WTC11 (cell line): ENCODE measurements at regions of chr1 and their contacts with region 1.

Region 1: GRCh38 chr1:160291248-160292220 is 6.6 kb upstream of the PEX19 start:
- DNase-seq: peak; percentile 61
- ATAC-seq: peak; percentile 95
- H3K4me3 Mint-ChIP-seq: no peak overlapping the region
- H3K27ac Mint-ChIP-seq: no peak overlapping the region
- H3K4me1 Mint-ChIP-seq: peaks cover 2% of the 10 kb centered on the region
- H3K27me3 Mint-ChIP-seq: no peaks in the 10 kb centered on the region
- CTCF ChIP-seq: peak; percentile 66

Region 2: GRCh38 chr1:160071289-160071688 is 220.2 kb before region 1 on chr1:
- CTCF ChIA-PET with region 1: no interaction called
- POLR2A ChIA-PET with region 1: no interaction called
- DNase-seq: no peak
- ATAC-seq: no peak
- H3K4me3 Mint-ChIP-seq: no peak overlapping the region
- H3K27ac Mint-ChIP-seq: no peak overlapping the region
- H3K4me1 Mint-ChIP-seq: peaks cover 32% of the 10 kb centered on the region
- H3K27me3 Mint-ChIP-seq: peaks cover 81% of the 10 kb centered on the region
- CTCF ChIP-seq: no peak

Region 3: GRCh38 chr1:160108888-160109662 is 182.5 kb before region 1 on chr1:
- CTCF ChIA-PET with region 1: interaction called, 48 read pairs
- POLR2A ChIA-PET with region 1: no interaction called
- DNase-seq: no peak
- ATAC-seq: peak; percentile 61
- H3K4me3 Mint-ChIP-seq: no peak overlapping the region; the same call in 1 of the 2 replicates
- H3K27ac Mint-ChIP-seq: peak overlapping the region; percentile 30
- H3K4me1 Mint-ChIP-seq: peaks cover 50% of the 10 kb centered on the region
- H3K27me3 Mint-ChIP-seq: peaks cover 5% of the 10 kb centered on the region; the same call in 1 of the 2 replicates
- CTCF ChIP-seq: peak; percentile 33; the same call in 1 of the 2 replicates

Region 4: GRCh38 chr1:160169553-160170399 is 121.8 kb before region 1 on chr1:
- CTCF ChIA-PET with region 1: interaction called, 14 read pairs
- POLR2A ChIA-PET with region 1: no interaction called
- DNase-seq: peak; percentile 75
- ATAC-seq: peak; percentile 78
- H3K4me3 Mint-ChIP-seq: peak overlapping the region; percentile 42
- H3K27ac Mint-ChIP-seq: peak overlapping the region; percentile 94
- H3K4me1 Mint-ChIP-seq: peaks cover 64% of the 10 kb centered on the region
- H3K27me3 Mint-ChIP-seq: peaks cover 25% of the 10 kb centered on the region
- CTCF ChIP-seq: no peak

Region 5: GRCh38 chr1:160261893-160262794 is 29.4 kb before region 1 on chr1 and contains the start of gene DCAF8:
- CTCF ChIA-PET with region 1: interaction called, 18 read pairs
- POLR2A ChIA-PET with region 1: interaction called, 3 read pairs
- DNase-seq: peak; percentile 99
- ATAC-seq: peak; percentile 96
- H3K4me3 Mint-ChIP-seq: peak within 1 kb of the TSS; percentile 98
- H3K27ac Mint-ChIP-seq: peak within 1 kb of the TSS; percentile 99
- H3K4me1 Mint-ChIP-seq: peaks cover 32% of the 10 kb centered on the region
- H3K27me3 Mint-ChIP-seq: peaks cover 7% of the 10 kb centered on the region; the same call in 1 of the 2 replicates
- CTCF ChIP-seq: no peak
- total RNA-seq, gene DCAF8: 121 to 143 TPM (median 128 TPM) in 3 replicates

Region 6: GRCh38 chr1:160307118-160307854 is 15.8 kb after region 1 on chr1:
- CTCF ChIA-PET with region 1: interaction called, 49 read pairs
- POLR2A ChIA-PET with region 1: interaction called, 4 read pairs
- DNase-seq: peak; percentile 67
- ATAC-seq: peak; percentile 100
- H3K4me3 Mint-ChIP-seq: peak overlapping the region; percentile 35
- H3K27ac Mint-ChIP-seq: peak overlapping the region; percentile 74; the same call in 1 of the 2 replicates
- H3K4me1 Mint-ChIP-seq: peaks cover 33% of the 10 kb centered on the region
- H3K27me3 Mint-ChIP-seq: no peaks in the 10 kb centered on the region
- CTCF ChIP-seq: no peak

Region 7: GRCh38 chr1:160376525-160377131 is 85.1 kb after region 1 on chr1:
- CTCF ChIA-PET with region 1: interaction called, 48 read pairs
- POLR2A ChIA-PET with region 1: no interaction called
- DNase-seq: no peak
- ATAC-seq: peak; percentile 71
- H3K4me3 Mint-ChIP-seq: peak overlapping the region; percentile 49
- H3K27ac Mint-ChIP-seq: no peak overlapping the region
- H3K4me1 Mint-ChIP-seq: peaks cover 35% of the 10 kb centered on the region
- H3K27me3 Mint-ChIP-seq: no peaks in the 10 kb centered on the region
- CTCF ChIP-seq: peak; percentile 61